ENCODE measurements at regions of chr7 and their contacts with region 1.

Region 1: DNA sequence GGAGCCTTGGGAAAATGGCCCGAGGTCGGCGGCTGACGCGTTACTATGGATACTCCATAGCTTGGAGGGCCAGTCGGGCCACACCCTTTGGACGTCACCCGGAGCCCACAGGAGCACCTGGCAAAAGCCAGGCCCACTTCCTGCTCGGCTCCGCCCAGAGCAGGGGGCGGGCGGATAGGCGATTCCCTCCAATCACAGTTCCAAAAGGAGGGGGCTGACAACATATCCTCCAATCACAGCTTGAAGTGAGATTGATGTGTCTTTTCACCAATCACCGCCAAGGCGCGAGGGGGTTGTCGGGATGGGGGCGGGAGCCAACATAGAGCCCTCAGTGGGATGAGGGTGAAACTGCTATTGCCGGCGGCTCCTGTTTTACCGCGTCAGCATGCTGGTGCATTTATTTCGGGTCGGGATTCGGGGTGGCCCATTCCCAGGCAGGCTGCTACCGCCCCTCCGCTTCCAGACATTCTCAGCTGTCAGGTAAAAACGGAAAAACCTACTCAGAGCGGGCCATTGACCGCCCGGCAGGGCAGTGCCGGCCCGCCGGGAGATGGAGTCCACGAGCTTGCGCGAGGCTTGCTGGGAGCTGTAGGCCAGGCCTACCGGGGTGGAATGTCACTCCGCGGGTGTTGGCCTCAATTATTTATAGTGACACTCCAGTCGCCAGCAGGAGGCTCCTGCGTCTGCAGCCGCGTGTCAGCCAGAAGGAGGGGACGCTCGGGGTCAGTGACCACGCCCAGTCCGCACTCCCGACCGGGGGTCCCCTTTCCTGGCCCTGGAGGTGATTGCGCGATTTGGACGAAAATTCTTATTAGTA is at the start of gene ABCB8:
- DNase-seq: peak; percentile 99
- H3K4me3 Mint-ChIP-seq: peak within 1 kb of the TSS; percentile 94
- H3K27ac Mint-ChIP-seq: peak within 1 kb of the TSS; percentile 90
- H3K4me1 Mint-ChIP-seq: peaks cover 18% of the 10 kb centered on the region
- H3K27me3 Mint-ChIP-seq: no peaks in the 10 kb centered on the region
- total RNA-seq, gene ABCB8: 48.4 to 49.5 TPM

Region 2: GRCh38 chr7:151038951-151039849 is 10.9 kb after region 1 on chr7:
- CTCF ChIA-PET with region 1: interaction called, 6 read pairs
- POLR2A ChIA-PET with region 1: interaction called, 11 read pairs
- intact Hi-C with region 1: loop called (anchors 1 kb)
- DNase-seq: peak; percentile 91
- H3K4me3 Mint-ChIP-seq: no peak overlapping the region
- H3K27ac Mint-ChIP-seq: peak overlapping the region; percentile 91
- H3K4me1 Mint-ChIP-seq: peaks cover 16% of the 10 kb centered on the region
- H3K27me3 Mint-ChIP-seq: no peaks in the 10 kb centered on the region

Region 3: GRCh38 chr7:151057989-151058780 is 29.8 kb after region 1 on chr7:
- CTCF ChIA-PET with region 1: interaction called, 10 read pairs
- POLR2A ChIA-PET with region 1: no interaction called
- intact Hi-C with region 1: loop called (anchors 1 kb)
- DNase-seq: peak; percentile 98
- H3K4me3 Mint-ChIP-seq: peak overlapping the region; percentile 89
- H3K27ac Mint-ChIP-seq: peak overlapping the region; percentile 89
- H3K4me1 Mint-ChIP-seq: peaks cover 25% of the 10 kb centered on the region
- H3K27me3 Mint-ChIP-seq: no peaks in the 10 kb centered on the region

Region 4: GRCh38 chr7:151080522-151081169 is 52.3 kb after region 1 on chr7 and contains the start of gene FASTK:
- CTCF ChIA-PET with region 1: interaction called, 8 read pairs
- POLR2A ChIA-PET with region 1: interaction called, 3 read pairs
- intact Hi-C with region 1: loop called (anchors 1 kb)
- DNase-seq: peak; percentile 93
- H3K4me3 Mint-ChIP-seq: peak within 1 kb of the TSS; percentile 98
- H3K27ac Mint-ChIP-seq: peak within 1 kb of the TSS; percentile 86
- H3K4me1 Mint-ChIP-seq: peaks cover 35% of the 10 kb centered on the region
- H3K27me3 Mint-ChIP-seq: peaks cover 5% of the 10 kb centered on the region
- total RNA-seq, gene FASTK: 56.8 to 57.4 TPM

Region 5: DNA sequence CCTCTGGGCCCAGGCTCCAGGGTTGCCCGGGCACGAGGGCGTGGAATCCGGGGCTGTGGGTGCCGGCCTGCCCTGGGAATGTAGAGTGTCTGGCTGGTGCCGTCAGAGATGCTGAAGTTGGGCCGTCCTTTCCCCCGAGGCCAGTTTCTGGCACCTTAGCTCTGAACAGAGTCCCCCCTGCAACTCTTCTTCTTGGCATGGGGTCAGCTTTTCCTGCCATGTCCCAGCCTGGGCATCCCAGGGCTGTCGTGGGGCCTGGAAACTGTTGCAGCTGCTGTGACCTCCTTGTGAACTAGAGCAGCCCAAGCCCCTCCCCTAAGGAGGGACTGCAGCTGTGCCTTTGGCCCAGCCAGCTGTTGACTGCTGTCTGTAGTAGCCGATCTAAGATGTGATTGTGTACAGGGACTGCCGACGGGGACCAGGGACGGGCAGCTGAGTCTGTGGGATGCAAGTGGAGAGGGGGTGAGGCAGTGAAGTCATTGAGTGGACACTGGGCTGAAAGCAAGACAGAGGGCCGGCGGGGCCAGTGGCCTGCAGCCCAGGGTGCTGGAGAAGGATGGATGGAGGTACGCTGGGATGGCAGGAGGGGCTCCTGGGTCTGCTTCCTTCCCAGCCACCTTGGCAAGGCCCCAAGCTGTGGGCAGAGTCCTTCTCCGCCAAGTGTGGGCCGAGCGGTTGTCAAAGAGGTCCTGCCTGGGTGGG is 103.4 kb after region 1 on chr7:
- CTCF ChIA-PET with region 1: no interaction called
- POLR2A ChIA-PET with region 1: no interaction called
- intact Hi-C with region 1: no loop called
- DNase-seq: no peak
- H3K4me3 Mint-ChIP-seq: no peak overlapping the region
- H3K27ac Mint-ChIP-seq: no peak overlapping the region
- H3K4me1 Mint-ChIP-seq: no peaks in the 10 kb centered on the region
- H3K27me3 Mint-ChIP-seq: no peaks in the 10 kb centered on the region